ENCODE measurements at regions of chr2 and their contacts with region 1.

Region 1: DNA sequence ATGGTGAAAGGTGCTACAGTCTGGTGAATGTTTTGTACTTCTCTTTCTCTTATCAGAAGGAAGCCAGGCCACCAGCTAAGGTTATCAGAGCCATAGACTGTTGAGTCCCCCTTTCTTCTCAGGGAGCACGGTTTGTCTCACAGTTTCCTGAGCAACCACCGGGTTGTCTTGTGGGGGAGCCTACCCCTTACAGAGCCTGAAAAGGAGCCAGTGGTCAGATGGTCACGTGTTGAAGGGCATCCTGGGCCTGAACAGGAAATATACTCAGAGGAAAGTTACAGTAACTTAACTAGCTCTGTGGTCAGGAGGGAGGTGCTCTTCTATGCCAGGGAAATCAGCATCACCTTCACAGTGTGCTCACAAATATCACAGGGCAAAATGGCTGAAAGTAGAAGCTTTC is 11.6 kb downstream of the CD28 start:
- DNase-seq: peak in 8 of 9 donors; percentile 45 to 62 (median 60)
- ATAC-seq: peak; percentile 49
- H3K4me3 ChIP-seq: peak overlapping the region; percentile 29
- H3K4me3 Mint-ChIP-seq: peak overlapping the region; percentile 23 to 91 (median 80)
- H3K27ac ChIP-seq: peak overlapping the region; percentile 71
- H3K27ac Mint-ChIP-seq: peak overlapping the region; percentile 90 to 99 (median 97)
- H3K4me1 ChIP-seq: peaks cover 89 to 95% of the 10 kb centered on the region in 2 donors
- H3K4me1 Mint-ChIP-seq: peaks cover 77 to 100% (median 95%) of the 10 kb centered on the region in 7 donors
- H3K27me3 ChIP-seq: no peaks in the 10 kb centered on the region
- H3K27me3 Mint-ChIP-seq: no peaks in the 10 kb centered on the region

Region 2: GRCh38 chr2:203673933-203674332 is 44.2 kb before region 1 on chr2:
- CTCF ChIA-PET with region 1: no interaction called
- POLR2A ChIA-PET with region 1: no interaction called
- intact Hi-C with region 1: no loop called
- DNase-seq: peak in 1 of 9 donors; percentile 56
- ATAC-seq: peak; percentile 73
- H3K4me3 ChIP-seq: no peak overlapping the region
- H3K4me3 Mint-ChIP-seq: peak overlapping the region in 1 of 10 donors; percentile 46
- H3K27ac ChIP-seq: no peak overlapping the region
- H3K27ac Mint-ChIP-seq: peak overlapping the region in 1 of 9 donors; percentile 56
- H3K4me1 ChIP-seq: peaks cover 4 to 6% of the 10 kb centered on the region in 2 donors
- H3K4me1 Mint-ChIP-seq: peaks cover 10 to 35% (median 25%) of the 10 kb centered on the region in 7 donors
- H3K27me3 ChIP-seq: no peaks in the 10 kb centered on the region
- H3K27me3 Mint-ChIP-seq: no peaks in the 10 kb centered on the region

Region 3: DNA sequence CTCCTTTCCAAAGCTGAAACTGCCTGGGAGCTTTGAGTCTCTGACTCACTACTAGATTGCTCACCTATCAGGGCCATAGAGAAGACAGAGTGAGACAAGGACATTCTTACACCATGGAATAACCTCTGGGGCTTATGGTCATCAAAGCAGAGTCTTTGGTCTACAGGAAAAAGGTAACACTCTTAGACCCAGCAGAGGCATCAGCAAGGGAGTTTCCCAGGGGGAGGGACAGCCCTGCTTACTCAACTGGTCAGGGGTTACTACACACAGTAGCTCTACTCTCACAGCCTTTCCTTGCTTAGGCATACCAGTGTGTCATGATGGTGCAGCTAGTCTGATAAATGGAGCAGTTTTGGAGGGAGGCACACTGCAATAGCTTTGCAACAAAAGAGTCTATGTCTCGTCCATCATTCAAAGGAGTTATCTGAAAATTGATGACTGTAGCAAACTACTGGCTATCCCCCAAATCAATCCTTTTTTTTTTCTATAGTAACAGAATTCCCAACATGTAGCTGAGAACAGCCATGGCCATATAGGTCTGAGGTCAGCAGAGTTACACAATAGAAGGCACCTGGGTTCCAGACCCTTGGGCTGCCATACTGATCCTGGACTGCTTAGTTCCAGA is 34.0 kb before region 1 on chr2:
- CTCF ChIA-PET with region 1: no interaction called
- POLR2A ChIA-PET with region 1: no interaction called
- intact Hi-C with region 1: no loop called
- DNase-seq: no peak
- ATAC-seq: peak; percentile 81
- H3K4me3 ChIP-seq: no peak overlapping the region
- H3K4me3 Mint-ChIP-seq: no peak overlapping the region
- H3K27ac ChIP-seq: no peak overlapping the region
- H3K27ac Mint-ChIP-seq: peak overlapping the region in 1 of 9 donors; percentile 4
- H3K4me1 ChIP-seq: peaks cover 3 to 18% of the 10 kb centered on the region in 2 donors
- H3K4me1 Mint-ChIP-seq: peaks cover 21 to 54% (median 32%) of the 10 kb centered on the region in 7 donors
- H3K27me3 ChIP-seq: no peaks in the 10 kb centered on the region
- H3K27me3 Mint-ChIP-seq: no peaks in the 10 kb centered on the region

Region 4: DNA sequence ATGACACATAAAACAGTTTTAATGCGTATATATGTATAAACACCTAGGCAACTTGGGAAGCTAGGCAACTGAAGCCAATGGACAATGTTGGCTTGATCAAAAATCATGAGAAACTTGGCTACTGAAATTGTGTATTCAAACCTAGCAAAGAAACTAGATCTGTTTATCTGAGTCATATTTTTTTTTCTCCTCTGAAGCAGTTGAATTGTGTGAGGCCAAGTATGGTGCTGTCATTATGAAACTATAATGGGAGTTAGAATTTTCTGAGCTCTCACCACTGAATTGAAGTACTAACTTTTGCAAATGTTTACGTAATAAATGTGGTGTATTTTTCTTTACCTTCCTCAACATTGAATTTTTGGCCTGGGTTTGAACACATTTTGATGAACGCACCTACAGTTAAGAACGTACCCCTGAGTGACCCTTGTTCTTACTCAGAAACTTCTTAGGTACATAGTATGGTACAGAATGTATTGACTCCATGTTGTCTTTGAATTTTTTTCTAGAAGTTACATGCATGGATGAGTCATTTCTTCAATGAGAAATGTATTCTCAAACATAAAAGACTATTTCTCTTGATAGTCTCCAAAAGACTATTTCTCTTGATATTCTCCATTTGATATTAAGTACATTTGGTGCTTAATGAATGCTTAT is 12.1 kb after region 1 on chr2:
- CTCF ChIA-PET with region 1: interaction called, 21 read pairs
- POLR2A ChIA-PET with region 1: interaction called, 108 read pairs
- intact Hi-C with region 1: loop called (anchors 1 kb)
- DNase-seq: no peak
- ATAC-seq: peak; percentile 39
- H3K4me3 ChIP-seq: no peak overlapping the region
- H3K4me3 Mint-ChIP-seq: peak overlapping the region in 9 of 10 donors; percentile 23 to 81 (median 67)
- H3K27ac ChIP-seq: peak overlapping the region; percentile 43
- H3K27ac Mint-ChIP-seq: peak overlapping the region; percentile 86 to 95 (median 90)
- H3K4me1 ChIP-seq: peaks cover 64 to 82% of the 10 kb centered on the region in 2 donors
- H3K4me1 Mint-ChIP-seq: peaks cover 45 to 96% (median 91%) of the 10 kb centered on the region in 7 donors
- H3K27me3 ChIP-seq: no peaks in the 10 kb centered on the region
- H3K27me3 Mint-ChIP-seq: no peaks in the 10 kb centered on the region

Region 5: DNA sequence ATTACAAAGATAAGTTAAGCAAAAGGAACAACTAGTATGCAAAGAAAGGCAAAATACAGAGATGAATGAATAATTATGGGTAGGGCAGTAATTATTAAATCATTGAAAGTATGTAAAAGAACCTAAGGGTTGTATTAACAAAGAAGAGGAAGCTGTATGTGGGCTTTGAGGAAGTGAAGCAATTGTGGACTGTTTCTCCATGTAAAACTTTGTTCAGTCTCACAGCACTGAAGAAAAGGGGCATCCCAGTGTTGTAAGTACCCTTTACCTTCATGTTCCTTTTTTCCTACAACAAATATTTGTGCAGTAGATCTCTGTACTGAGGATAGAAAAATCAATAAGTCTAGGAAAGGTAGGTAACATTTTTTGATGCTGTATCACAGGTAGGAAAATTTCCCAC is 1575.5 kb after region 1 on chr2:
- CTCF ChIA-PET with region 1: no interaction called
- POLR2A ChIA-PET with region 1: no interaction called
- intact Hi-C with region 1: no loop called
- DNase-seq: no peak
- ATAC-seq: peak; percentile 42
- H3K4me3 ChIP-seq: no peak overlapping the region
- H3K4me3 Mint-ChIP-seq: no peak overlapping the region
- H3K27ac ChIP-seq: no peak overlapping the region
- H3K27ac Mint-ChIP-seq: no peak overlapping the region
- H3K4me1 ChIP-seq: no peaks in the 10 kb centered on the region
- H3K4me1 Mint-ChIP-seq: peaks cover 0 to 3% (median 0%) of the 10 kb centered on the region in 7 donors
- H3K27me3 ChIP-seq: no peaks in the 10 kb centered on the region
- H3K27me3 Mint-ChIP-seq: peaks cover 0 to 16% (median 0%) of the 10 kb centered on the region in 5 donors